Adrenal gland (tissue), 19 donors: ENCODE measurements at regions of chr17 and their contacts with region 1.

Region 1: GRCh38 chr17:4420692-4421131 is 13.0 kb upstream of the SPNS3 start:
- DNase-seq: peak; percentile 51 to 85 (median 68)
- H3K4me3 ChIP-seq: no peak overlapping the region
- H3K27ac ChIP-seq: no peak overlapping the region
- H3K4me1 ChIP-seq: no peaks in the 10 kb centered on the region
- H3K27me3 ChIP-seq: no peaks in the 10 kb centered on the region
- CTCF ChIP-seq: peak; percentile 57 to 86 (median 80)
- POLR2A ChIP-seq: no peak

Region 2: DNA sequence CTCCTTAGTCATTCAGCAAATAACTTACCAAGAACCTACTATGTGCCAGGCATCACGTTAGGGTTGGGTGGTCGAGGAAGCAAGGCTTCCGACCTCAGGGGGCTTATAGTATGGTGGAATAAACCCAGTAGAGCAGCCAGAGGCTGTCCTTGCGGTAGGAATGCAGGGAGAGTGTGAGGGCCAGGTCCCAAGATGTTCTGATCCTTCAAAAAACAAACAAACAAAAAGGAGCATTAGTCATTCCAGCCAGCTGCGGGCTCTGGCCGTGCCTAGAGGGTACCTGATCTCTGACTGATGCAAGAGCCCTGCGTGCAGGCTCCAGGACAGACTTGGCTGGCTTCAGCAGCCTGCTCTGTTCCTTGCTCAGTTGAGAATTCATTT is 259.5 kb before region 1 on chr17:
- intact Hi-C with region 1: no loop called
- DNase-seq: peak; percentile 51 to 91 (median 79)
- H3K4me3 ChIP-seq: no peak overlapping the region
- H3K27ac ChIP-seq: peak overlapping the region; percentile 31 to 82 (median 68)
- H3K4me1 ChIP-seq: peaks cover 23 to 31% of the 10 kb centered on the region in 2 donors
- H3K27me3 ChIP-seq: no peaks in the 10 kb centered on the region
- CTCF ChIP-seq: peak in 4 of 6 experiments; percentile 15 to 52 (median 42)
- POLR2A ChIP-seq: peak in 1 of 2 donors; percentile 16

Region 3: DNA sequence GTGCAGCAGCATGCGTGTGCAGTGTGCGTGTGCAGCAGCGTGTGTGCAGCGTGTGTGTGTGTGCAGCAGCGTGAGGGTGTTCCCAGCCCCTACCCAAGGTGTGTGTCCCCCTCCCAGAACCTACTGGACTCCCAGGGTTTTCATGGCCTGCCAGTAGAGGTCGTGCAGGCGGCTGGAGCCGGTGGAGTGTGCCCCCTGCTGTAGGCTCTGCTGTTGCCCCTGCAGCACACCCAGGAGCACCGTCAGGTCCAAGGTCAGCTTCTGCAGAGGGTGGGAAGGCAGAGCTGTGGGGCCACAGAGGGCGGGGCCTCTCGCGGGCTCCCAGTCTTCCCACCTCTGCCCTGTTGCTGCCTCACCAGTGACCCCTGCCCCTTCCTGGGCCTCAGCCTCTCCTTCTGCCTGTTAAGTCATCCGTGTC is 119.5 kb after region 1 on chr17:
- intact Hi-C with region 1: loop called in 1 of 2 experiments (anchors 10 kb)
- DNase-seq: no peak
- H3K4me3 ChIP-seq: no peak overlapping the region
- H3K27ac ChIP-seq: peak overlapping the region in 1 of 5 donors; percentile 61
- H3K4me1 ChIP-seq: peaks cover 10 to 25% of the 10 kb centered on the region in 2 donors
- H3K27me3 ChIP-seq: no peaks in the 10 kb centered on the region
- CTCF ChIP-seq: peak in 1 of 6 experiments; percentile 3
- POLR2A ChIP-seq: no peak

Region 4: GRCh38 chr17:4625181-4625617 is 204.5 kb after region 1 on chr17:
- intact Hi-C with region 1: loop called (anchors 5 kb)
- DNase-seq: no peak
- H3K4me3 ChIP-seq: no peak overlapping the region
- H3K27ac ChIP-seq: no peak overlapping the region
- H3K4me1 ChIP-seq: no peaks in the 10 kb centered on the region
- H3K27me3 ChIP-seq: peaks cover 3% of the 10 kb centered on the region
- CTCF ChIP-seq: no peak
- POLR2A ChIP-seq: no peak

Region 5: GRCh38 chr17:4631836-4632580 is 211.3 kb after region 1 on chr17:
- intact Hi-C with region 1: loop called in 1 of 2 experiments (anchors 5 kb)
- DNase-seq: no peak
- H3K4me3 ChIP-seq: no peak overlapping the region
- H3K27ac ChIP-seq: no peak overlapping the region
- H3K4me1 ChIP-seq: no peaks in the 10 kb centered on the region
- H3K27me3 ChIP-seq: peaks cover 3% of the 10 kb centered on the region
- CTCF ChIP-seq: no peak
- POLR2A ChIP-seq: no peak